Naive thymus-derived CD8-positive, alpha-beta T cell (primary cell): ENCODE measurements at regions of chr6 and their contacts with region 1.

Region 1: DNA sequence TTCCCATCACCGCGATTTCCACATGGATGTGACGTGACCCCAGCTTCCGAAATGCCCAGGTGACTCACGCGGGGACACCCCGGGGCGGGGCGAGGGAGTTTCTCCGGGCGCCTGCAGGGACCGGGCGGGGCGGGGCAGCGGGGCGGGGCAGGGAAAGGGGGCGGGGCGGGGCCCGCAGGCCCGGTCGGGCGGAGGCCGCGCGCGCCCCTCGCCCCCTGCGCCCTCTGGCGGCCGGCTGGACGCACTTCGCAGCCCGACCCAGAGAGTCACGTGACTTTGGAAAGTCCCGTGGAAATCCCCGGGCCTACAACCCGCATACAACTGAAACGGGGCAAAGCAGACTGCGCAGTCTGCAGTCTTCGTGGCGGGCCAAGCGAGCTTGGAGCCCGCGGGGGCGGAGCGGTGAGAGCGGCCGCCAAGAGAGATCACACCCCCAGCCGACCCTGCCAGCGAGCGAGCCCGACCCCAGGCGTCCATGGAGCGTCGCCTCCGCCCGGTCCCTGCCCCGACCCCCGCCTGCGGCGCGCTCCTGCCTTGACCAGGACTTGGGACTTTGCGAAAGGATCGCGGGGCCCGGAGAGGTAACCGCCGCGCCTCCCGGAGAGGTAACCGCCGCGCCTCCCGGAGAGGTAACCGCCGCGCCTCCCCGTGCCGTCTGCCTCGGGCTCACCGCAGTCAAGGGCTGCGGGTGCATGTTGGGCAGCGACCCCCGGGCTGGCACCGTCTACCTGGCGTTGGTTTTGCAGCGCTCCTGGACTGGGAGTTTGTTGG is at the start of gene TNFAIP3:
- DNase-seq: peak; percentile 93 to 100 (median 96)
- ATAC-seq: peak; percentile 71 to 74
- H3K4me3 Mint-ChIP-seq: peak within 1 kb of the TSS; percentile 92 to 99 (median 96)
- H3K27ac Mint-ChIP-seq: peak within 1 kb of the TSS; percentile 96 to 99 (median 99)
- H3K4me1 Mint-ChIP-seq: peaks cover 38 to 66% (median 60%) of the 10 kb centered on the region in 4 donors
- H3K27me3 Mint-ChIP-seq: no peaks in the 10 kb centered on the region
- polyA plus RNA-seq, gene TNFAIP3: 61.5 to 139 (median 84.3) TPM

Region 2: DNA sequence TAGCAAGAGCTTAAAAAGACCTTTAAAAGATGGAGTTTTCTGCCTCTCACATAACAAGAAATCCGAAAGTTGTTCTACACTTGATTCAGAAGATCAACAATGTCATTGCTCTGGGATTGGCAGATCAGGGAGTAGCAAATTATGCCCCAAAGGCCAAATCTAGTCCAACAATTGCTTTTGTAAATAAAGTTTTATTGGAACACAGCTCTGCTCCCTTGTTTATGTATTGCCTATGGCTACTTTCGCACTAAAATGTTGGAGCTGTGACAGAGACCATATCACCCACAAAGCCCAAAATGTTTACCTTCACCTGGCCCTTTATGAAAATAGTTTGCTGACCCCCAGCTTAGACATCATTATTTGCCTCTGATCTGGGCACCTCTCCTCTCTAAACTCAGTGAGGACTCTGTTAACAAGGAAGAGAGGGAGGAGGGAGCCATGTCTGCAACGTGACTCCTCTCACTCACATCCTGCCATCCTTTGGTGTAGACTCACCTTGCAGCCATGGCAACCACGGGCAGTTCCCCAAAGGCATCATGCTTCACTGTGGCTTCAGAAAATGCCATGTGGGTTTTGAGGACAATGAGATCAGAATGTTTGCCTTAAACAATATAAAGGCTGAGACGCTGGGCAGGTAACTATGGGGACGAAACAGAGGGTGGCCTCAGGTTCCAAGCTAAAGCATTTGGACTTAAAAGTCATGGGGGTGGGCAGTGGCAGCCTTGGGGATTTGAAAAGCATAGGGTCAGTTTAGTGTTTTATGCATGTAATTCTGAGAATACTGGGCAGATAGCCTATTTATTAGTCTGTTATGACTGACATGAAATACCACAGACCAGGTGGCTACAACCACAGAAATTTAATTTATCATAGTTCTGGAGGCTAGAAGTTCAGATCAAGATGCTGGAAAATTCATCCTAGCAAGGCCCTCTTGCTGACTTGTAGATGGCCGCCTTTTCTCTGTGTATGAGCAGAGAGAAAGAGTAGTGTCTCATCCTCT is 149.7 kb before region 1 on chr6:
- POLR2A ChIA-PET with region 1: interaction called, 12 read pairs
- DNase-seq: peak; percentile 44 to 93 (median 78)
- ATAC-seq: peak; percentile 65 to 66
- H3K4me3 Mint-ChIP-seq: peak overlapping the region in 9 of 10 donors; percentile 8 to 62 (median 38)
- H3K27ac Mint-ChIP-seq: peak overlapping the region; percentile 72 to 99 (median 96)
- H3K4me1 Mint-ChIP-seq: peaks cover 6 to 47% (median 36%) of the 10 kb centered on the region in 4 donors
- H3K27me3 Mint-ChIP-seq: no peaks in the 10 kb centered on the region

Region 3: GRCh38 chr6:137811121-137811915 is 55.8 kb before region 1 on chr6:
- POLR2A ChIA-PET with region 1: interaction called, 19 read pairs
- DNase-seq: peak; percentile 46 to 87 (median 68)
- ATAC-seq: peak; percentile 95 to 98
- H3K4me3 Mint-ChIP-seq: peak overlapping the region; percentile 55 to 85 (median 74)
- H3K27ac Mint-ChIP-seq: peak overlapping the region; percentile 83 to 98 (median 95)
- H3K4me1 Mint-ChIP-seq: peaks cover 22 to 60% (median 39%) of the 10 kb centered on the region in 4 donors
- H3K27me3 Mint-ChIP-seq: no peaks in the 10 kb centered on the region

Region 4: GRCh38 chr6:137883400-137884148 is 16.5 kb after region 1 on chr6:
- POLR2A ChIA-PET with region 1: interaction called, 30 read pairs
- DNase-seq: peak in 5 of 10 donors; percentile 38 to 71 (median 54)
- ATAC-seq: peak; percentile 33 to 37
- H3K4me3 Mint-ChIP-seq: peak overlapping the region; percentile 11 to 85 (median 61)
- H3K27ac Mint-ChIP-seq: peak overlapping the region; percentile 80 to 99 (median 95)
- H3K4me1 Mint-ChIP-seq: peaks cover 26 to 60% (median 53%) of the 10 kb centered on the region in 4 donors
- H3K27me3 Mint-ChIP-seq: peaks cover 0 to 10% (median 0%) of the 10 kb centered on the region in 5 donors

Region 5: DNA sequence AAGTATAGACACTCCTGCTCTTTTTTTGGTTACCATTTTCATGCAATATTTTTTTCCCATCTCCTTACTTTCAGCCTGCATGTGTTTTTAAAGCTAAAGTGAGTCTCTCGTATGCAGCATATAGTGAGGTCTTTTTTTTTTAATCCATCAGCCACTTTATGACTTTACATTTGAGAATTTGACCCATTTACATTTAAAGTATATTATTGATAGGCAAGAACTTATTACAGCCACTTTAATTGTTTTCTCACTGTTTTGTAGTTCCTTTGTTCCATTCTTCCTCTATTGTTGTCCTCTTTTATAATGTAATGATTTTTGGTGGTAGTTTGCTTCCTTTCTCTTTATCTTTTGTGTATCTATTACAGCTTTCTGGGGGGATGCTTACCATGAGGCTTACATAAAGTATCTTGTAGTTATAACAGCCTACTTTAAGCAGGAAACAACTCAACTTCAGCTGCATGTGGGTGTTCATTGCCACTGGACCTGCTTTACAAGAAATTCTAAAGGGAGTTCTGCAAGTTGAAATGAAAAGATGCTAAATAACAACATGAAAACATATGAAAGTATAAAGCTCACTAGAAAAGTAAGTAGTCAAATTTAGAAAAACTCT is 71.8 kb after region 1 on chr6:
- POLR2A ChIA-PET with region 1: interaction called, 10 read pairs
- DNase-seq: no peak
- ATAC-seq: no peak
- H3K4me3 Mint-ChIP-seq: no peak overlapping the region
- H3K27ac Mint-ChIP-seq: peak overlapping the region in 1 of 10 donors; percentile 32
- H3K4me1 Mint-ChIP-seq: peaks cover 6 to 15% (median 10%) of the 10 kb centered on the region in 4 donors
- H3K27me3 Mint-ChIP-seq: no peaks in the 10 kb centered on the region